ENCODE measurements at regions of chr9 and their contacts with region 1.

Region 1: GRCh38 chr9:4984621-4985385 is at the start of gene JAK2:
- DNase-seq: peak; percentile 92
- H3K4me3 Mint-ChIP-seq: no peak within 1 kb of the TSS
- H3K27ac Mint-ChIP-seq: peak within 1 kb of the TSS; percentile 97
- H3K4me1 Mint-ChIP-seq: peaks cover 46% of the 10 kb centered on the region
- H3K27me3 Mint-ChIP-seq: no peaks in the 10 kb centered on the region
- total RNA-seq, gene JAK2: 46.8 to 51.0 TPM

Region 2: GRCh38 chr9:4667681-4668080 is 317.1 kb before region 1 on chr9:
- CTCF ChIA-PET with region 1: no interaction called
- intact Hi-C with region 1: loop called (anchors 2 kb)
- DNase-seq: no peak
- H3K4me3 Mint-ChIP-seq: no peak overlapping the region
- H3K27ac Mint-ChIP-seq: no peak overlapping the region
- H3K4me1 Mint-ChIP-seq: peaks cover 76% of the 10 kb centered on the region
- H3K27me3 Mint-ChIP-seq: no peaks in the 10 kb centered on the region

Region 3: DNA sequence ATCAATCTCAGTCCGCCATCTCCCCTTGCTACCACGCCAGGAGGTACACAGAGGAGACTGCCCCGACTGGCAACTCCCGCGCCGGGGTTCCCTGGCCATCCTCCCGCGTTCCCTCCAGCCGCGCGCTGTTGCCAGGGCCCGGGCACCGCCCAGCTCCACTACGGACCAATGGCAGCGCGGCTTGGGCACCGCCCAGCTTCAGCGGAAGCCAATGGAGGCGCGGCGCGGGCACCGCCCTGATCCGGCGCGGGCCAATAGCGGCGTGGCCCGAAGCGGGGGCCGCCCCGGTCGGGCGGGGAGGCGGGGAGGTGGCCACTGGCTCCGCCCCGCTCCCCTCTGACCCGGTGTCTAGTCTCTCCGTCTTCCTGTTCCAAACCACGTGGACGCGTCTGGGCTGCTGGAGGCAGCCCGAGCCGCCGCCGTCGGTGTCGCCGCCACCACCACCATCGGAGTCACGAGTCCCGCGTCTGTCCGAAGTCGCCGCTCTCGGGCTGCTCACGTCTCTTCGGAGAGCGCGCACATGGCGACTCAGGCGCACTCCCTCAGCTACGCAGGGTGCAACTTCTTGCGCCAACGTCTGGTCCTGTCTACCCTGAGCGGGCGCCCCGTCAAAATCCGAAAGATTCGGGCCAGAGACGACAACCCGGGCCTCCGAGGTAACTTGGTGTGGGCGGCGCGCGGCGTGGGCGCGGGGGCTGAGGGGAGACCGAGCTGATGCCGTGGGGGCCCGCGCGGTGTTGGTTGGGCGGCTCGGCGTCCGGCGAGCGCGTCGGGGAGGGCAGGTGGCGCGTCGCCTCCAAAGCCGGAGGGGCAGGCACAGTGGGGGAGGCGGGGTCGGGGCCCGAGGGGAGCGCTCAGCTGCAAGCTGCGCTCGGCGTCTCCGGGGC is 192.0 kb before region 1 on chr9 and contains the start of gene RCL1:
- CTCF ChIA-PET with region 1: interaction called, 5 read pairs
- intact Hi-C with region 1: loop called (anchors 1 kb)
- DNase-seq: peak; percentile 97
- H3K4me3 Mint-ChIP-seq: peak within 1 kb of the TSS; percentile 96
- H3K27ac Mint-ChIP-seq: peak within 1 kb of the TSS; percentile 84
- H3K4me1 Mint-ChIP-seq: peaks cover 49% of the 10 kb centered on the region
- H3K27me3 Mint-ChIP-seq: no peaks in the 10 kb centered on the region
- total RNA-seq, gene RCL1: 26.9 to 30.7 TPM

Region 4: DNA sequence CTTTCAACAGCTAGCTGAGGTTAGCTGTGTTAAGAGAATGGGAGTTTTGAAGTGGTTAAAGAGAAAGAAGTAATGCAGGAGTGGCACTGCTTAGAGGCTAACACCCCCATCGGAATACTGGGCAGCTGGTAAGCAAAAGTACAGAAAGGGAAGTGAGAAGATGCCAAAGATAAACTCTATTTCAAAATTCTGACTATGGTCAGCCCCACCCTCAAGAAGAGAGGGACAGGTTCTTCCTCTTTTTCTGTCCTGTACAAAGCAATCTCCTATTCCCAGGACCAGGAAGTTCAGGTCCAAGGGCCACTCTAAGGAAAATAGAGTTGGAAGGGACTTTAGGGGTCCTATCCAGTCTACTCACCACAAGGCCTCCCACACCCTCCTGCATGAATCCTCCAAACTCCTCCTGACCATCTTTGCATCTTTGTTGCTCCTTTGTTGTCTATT is 45.7 kb before region 1 on chr9:
- CTCF ChIA-PET with region 1: interaction called, 10 read pairs
- intact Hi-C with region 1: loop called (anchors 1 kb)
- DNase-seq: no peak
- H3K4me3 Mint-ChIP-seq: no peak overlapping the region
- H3K27ac Mint-ChIP-seq: peak overlapping the region; percentile 88
- H3K4me1 Mint-ChIP-seq: peaks cover 79% of the 10 kb centered on the region
- H3K27me3 Mint-ChIP-seq: no peaks in the 10 kb centered on the region

Region 5: DNA sequence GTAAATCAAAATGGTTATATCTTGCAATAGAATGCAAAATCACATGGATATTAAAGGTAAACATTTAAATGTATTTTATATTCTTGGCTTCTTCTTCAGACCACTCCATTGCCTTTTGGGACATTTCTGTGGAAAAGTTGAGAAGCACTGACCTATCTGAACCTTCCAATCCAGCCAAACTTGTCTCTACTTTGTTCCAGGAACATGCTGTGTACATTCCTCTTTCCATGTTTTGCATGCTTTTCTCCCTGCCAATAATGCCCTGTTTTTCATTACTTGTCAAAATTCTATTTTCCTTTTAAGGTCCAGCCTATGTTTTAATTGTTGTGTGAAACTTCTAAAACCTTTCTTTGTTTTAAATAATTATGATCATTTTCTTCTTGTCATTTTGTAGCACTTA is 28.6 kb after region 1 on chr9:
- CTCF ChIA-PET with region 1: no interaction called
- intact Hi-C with region 1: no loop called
- DNase-seq: no peak
- H3K4me3 Mint-ChIP-seq: no peak overlapping the region
- H3K27ac Mint-ChIP-seq: no peak overlapping the region
- H3K4me1 Mint-ChIP-seq: peaks cover 13% of the 10 kb centered on the region
- H3K27me3 Mint-ChIP-seq: no peaks in the 10 kb centered on the region

Region 6: DNA sequence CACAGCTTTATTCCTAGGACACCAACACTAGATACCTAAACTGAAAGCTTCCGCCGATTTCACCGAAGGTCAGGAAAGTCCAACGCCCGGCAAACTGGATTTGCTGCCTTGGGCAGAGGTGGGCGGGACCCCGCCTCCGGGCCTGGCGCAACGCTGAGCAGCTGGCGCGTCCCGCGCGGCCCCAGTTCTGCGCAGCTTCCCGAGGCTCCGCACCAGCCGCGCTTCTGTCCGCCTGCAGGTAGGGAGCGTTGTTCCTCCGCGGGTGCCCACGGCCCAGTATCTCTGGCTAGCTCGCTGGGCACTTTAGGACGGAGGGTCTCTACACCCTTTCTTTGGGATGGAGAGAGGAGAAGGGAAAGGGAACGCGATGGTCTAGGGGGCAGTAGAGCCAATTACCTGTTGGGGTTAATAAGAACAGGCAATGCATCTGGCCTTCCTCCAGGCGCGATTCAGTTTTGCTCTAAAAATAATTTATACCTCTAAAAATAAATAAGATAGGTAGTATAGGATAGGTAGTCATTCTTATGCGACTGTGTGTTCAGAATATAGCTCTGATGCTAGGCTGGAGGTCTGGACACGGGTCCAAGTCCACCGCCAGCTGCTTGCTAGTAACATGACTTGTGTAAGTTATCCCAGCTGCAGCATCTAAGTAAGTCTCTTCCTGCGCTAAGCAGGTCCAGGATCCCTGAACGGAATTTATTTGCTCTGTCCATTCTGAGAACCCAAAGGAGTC is 465.7 kb after region 1 on chr9 and contains the start of gene CD274:
- CTCF ChIA-PET with region 1: no interaction called
- intact Hi-C with region 1: loop called (anchors 2 kb)
- DNase-seq: peak; percentile 83
- H3K4me3 Mint-ChIP-seq: peak within 1 kb of the TSS; percentile 89
- H3K27ac Mint-ChIP-seq: peak within 1 kb of the TSS; percentile 92
- H3K4me1 Mint-ChIP-seq: peaks cover 65% of the 10 kb centered on the region
- H3K27me3 Mint-ChIP-seq: no peaks in the 10 kb centered on the region
- total RNA-seq, gene CD274: 14.2 to 15.0 TPM

Region 7: GRCh38 chr9:5712651-5713390 is 728.0 kb after region 1 on chr9:
- CTCF ChIA-PET with region 1: no interaction called
- intact Hi-C with region 1: no loop called
- DNase-seq: no peak
- H3K4me3 Mint-ChIP-seq: no peak overlapping the region
- H3K27ac Mint-ChIP-seq: no peak overlapping the region
- H3K4me1 Mint-ChIP-seq: peaks cover 12% of the 10 kb centered on the region
- H3K27me3 Mint-ChIP-seq: no peaks in the 10 kb centered on the region

Region 8: DNA sequence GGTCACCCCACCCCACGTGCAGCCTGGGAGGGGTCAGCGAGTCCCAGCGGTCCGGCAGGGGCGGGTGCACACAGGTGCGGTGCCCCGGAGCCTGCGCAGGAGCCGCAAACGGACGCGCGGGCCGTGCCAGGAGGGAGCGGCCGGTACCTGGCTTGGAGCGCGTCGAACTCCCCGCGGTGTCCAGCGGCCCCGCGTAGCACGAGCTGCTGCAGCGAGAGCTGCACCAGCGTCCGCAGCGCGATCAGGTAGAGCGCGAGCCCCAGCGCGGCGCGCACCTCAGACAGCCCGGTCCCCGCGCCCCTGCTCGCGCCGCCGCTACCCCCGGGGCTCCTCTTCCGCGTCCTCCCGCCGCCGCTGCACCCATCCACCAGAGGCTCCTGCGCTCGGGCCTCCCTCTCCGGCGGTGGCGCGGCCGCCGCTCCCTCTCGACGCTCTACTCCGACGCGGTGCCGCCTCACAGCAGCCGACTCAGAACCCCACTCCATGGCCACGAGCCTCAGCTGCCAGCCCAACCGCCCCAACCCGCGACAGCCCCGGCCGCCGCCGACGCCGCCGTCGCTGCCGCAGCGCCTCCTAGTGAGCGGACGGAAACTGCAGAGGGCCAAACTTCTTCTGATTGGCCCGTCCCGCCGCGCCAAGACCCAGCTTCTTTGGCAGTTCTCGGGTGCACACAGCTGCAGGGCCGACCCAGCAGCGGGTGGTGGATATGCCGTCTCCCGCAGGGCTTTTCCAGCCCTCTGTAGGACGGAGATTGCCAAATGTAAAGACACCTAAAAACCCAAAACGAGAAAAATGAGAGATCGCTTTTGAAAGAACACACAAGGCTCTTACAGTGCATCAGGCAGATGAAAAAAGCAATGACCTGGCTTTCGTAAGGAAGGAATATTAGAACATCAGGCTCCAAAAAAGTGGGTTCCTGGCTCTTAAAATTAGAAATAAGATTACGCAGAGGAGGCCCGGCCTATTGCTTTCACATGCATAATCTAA is 848.0 kb after region 1 on chr9 and contains the start of gene ERMP1:
- CTCF ChIA-PET with region 1: no interaction called
- intact Hi-C with region 1: loop called (anchors 5 kb)
- DNase-seq: peak; percentile 93
- H3K4me3 Mint-ChIP-seq: peak within 1 kb of the TSS; percentile 93
- H3K27ac Mint-ChIP-seq: peak within 1 kb of the TSS; percentile 89
- H3K4me1 Mint-ChIP-seq: peaks cover 43% of the 10 kb centered on the region
- H3K27me3 Mint-ChIP-seq: no peaks in the 10 kb centered on the region
- total RNA-seq, gene ERMP1: 23.5 to 27.1 TPM